A673 (cell line): ENCODE measurements at regions of chr4 and their contacts with region 1.

Region 1: DNA sequence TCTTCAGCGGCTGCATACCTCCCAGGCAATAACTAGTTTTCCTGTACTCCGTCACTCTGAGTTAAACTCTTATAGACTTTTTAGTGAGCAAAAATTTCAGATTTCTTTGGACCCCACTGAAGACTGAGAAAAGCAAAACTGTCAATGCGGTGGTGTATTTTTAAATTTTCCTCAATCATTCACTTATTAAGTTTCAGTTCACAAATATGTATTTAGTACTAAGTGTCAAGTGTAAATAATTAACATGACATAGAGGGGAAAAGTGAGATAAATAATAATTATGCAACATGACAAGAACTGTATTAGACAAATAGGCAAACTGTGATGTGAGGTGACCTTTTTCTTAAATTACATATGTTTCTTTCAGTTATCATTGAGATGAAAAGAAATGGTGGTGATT is 124.4 kb downstream of the NAF1 start:
- DNase-seq: no peak
- H3K4me3 ChIP-seq: no peak overlapping the region
- H3K27ac ChIP-seq: no peak overlapping the region
- H3K4me1 ChIP-seq: no peaks in the 10 kb centered on the region
- H3K27me3 ChIP-seq: no peaks in the 10 kb centered on the region
- CTCF ChIP-seq: no peak

Region 2: DNA sequence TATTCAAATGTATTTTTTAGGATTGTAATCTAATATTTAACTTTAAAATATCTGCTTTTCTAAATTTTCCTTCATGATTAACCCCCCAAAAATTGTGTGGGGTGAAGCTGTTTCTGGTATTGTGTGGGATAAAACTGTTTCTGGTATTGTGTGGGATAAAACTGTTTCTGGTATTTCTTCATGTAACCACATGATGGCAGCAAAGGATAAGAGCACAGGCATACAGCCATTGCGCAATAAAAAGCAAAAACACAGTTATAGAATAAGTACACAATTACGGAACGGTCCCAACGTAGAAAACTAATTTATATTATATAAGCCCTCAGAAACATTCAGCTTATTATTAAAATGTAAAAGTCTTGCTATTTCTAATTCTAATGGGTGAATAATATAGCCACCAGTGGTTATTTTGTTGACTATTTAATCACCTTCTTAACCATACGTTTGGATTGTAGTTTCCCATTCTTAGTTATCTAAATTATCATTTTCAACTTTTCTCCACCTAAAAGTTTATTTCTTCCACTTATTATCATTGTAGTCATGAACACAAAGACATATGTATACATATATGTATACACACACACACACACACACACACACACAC is 544.6 kb before region 1 on chr4:
- CTCF ChIA-PET with region 1: interaction called, 11 read pairs
- POLR2A ChIA-PET with region 1: no interaction called
- intact Hi-C with region 1: loop called (anchors 1 kb)
- DNase-seq: peak; percentile 57
- H3K4me3 ChIP-seq: no peak overlapping the region
- H3K27ac ChIP-seq: no peak overlapping the region
- H3K4me1 ChIP-seq: no peaks in the 10 kb centered on the region
- H3K27me3 ChIP-seq: no peaks in the 10 kb centered on the region
- CTCF ChIP-seq: peak; percentile 76

Region 3: GRCh38 chr4:162506253-162506652 is 536.1 kb before region 1 on chr4:
- CTCF ChIA-PET with region 1: interaction called, 14 read pairs
- POLR2A ChIA-PET with region 1: no interaction called
- intact Hi-C with region 1: no loop called
- DNase-seq: no peak
- H3K4me3 ChIP-seq: no peak overlapping the region
- H3K27ac ChIP-seq: no peak overlapping the region
- H3K4me1 ChIP-seq: no peaks in the 10 kb centered on the region
- H3K27me3 ChIP-seq: no peaks in the 10 kb centered on the region
- CTCF ChIP-seq: no peak

Region 4: DNA sequence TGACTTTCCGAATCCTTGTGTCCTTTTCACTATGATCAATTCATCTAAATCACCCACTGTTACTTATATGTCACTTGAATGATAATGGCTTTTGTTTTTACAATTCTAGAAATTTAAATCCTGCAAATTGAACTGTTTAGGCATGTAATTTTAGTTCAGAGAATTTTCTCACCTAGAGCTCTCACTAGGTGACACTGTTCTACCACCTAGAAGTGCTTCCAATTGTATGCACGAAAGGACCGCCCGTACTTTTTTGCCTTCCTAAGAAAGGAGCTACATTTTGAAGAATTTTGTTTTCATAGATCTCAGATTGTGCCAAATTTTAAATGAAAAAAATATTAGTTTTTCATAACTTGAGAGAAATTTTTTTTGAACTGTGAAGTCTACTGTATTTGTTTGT is 396.9 kb before region 1 on chr4:
- CTCF ChIA-PET with region 1: no interaction called
- POLR2A ChIA-PET with region 1: no interaction called
- intact Hi-C with region 1: loop called (anchors 5 kb)
- DNase-seq: no peak
- H3K4me3 ChIP-seq: no peak overlapping the region
- H3K27ac ChIP-seq: no peak overlapping the region
- H3K4me1 ChIP-seq: no peaks in the 10 kb centered on the region
- H3K27me3 ChIP-seq: no peaks in the 10 kb centered on the region
- CTCF ChIP-seq: 0 out of 2 replicates have a peak, but pooled peaks have one; percentile 22

Region 5: DNA sequence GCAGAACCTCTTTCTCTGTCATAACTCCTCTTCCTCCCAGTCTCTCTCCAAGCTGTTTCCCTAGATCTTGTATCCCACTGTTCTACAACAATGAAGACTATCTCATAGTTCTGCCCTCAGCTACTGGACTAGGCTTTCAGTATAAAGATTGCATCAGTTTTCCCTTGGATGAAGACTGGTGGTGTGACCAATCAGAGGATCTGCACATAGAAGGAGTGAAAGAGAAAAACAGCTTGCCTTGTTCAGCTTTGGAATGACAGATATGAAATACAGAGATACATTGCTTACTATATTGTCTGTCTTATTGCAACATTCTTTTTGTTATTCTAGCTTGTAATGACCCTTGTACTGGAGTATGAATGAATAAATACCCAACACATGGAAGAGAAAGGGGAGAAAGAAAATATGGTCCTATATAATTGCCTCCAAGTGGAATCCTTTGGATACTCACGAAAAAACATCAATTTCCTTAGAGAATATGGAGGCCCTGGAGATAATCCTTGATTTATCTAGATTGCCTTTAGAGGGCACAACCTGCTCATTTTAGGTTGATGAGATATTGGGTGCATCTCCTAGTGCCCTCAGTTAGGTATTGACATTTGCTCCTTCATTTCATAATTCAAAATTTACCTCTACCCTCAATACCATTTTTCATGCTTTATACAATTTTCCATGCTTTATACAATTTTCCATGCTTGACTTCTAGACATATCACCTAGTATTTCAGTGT is 271.4 kb before region 1 on chr4:
- CTCF ChIA-PET with region 1: no interaction called
- POLR2A ChIA-PET with region 1: no interaction called
- intact Hi-C with region 1: loop called (anchors 5 kb)
- DNase-seq: peak; percentile 2
- H3K4me3 ChIP-seq: no peak overlapping the region
- H3K27ac ChIP-seq: no peak overlapping the region
- H3K4me1 ChIP-seq: no peaks in the 10 kb centered on the region
- H3K27me3 ChIP-seq: no peaks in the 10 kb centered on the region
- CTCF ChIP-seq: no peak; the same call in 1 of the 2 replicates

Region 6: GRCh38 chr4:162839819-162840218 is 202.5 kb before region 1 on chr4:
- CTCF ChIA-PET with region 1: no interaction called
- POLR2A ChIA-PET with region 1: no interaction called
- intact Hi-C with region 1: no loop called
- DNase-seq: no peak
- H3K4me3 ChIP-seq: no peak overlapping the region
- H3K27ac ChIP-seq: no peak overlapping the region
- H3K4me1 ChIP-seq: no peaks in the 10 kb centered on the region
- H3K27me3 ChIP-seq: no peaks in the 10 kb centered on the region
- CTCF ChIP-seq: peak; percentile 42

Region 7: DNA sequence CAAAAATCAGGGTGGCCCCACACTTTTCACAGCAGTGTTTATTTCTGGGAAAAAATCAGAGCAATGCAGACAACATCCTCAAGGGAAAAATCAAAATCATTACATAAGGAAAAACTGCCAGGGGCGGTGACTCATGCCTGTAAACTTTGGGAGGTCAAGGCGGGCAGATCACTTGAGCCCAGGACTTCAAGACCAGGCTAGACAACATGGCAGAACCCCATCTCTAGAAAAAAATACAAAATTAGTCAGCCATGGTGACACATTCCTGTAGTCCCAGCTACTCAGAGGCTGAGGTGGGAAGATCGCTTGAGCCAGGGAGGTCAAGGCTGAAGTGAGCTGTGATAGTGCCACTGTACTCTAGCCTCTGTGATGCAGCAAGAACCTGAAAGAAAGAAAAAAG is 21.6 kb after region 1 on chr4:
- CTCF ChIA-PET with region 1: no interaction called
- POLR2A ChIA-PET with region 1: no interaction called
- intact Hi-C with region 1: no loop called
- DNase-seq: no peak
- H3K4me3 ChIP-seq: no peak overlapping the region
- H3K27ac ChIP-seq: no peak overlapping the region
- H3K4me1 ChIP-seq: no peaks in the 10 kb centered on the region
- H3K27me3 ChIP-seq: no peaks in the 10 kb centered on the region
- CTCF ChIP-seq: no peak

Region 8: GRCh38 chr4:164288578-164288977 is 1246.3 kb after region 1 on chr4:
- CTCF ChIA-PET with region 1: no interaction called
- POLR2A ChIA-PET with region 1: no interaction called
- intact Hi-C with region 1: no loop called
- DNase-seq: no peak
- H3K4me3 ChIP-seq: no peak overlapping the region
- H3K27ac ChIP-seq: no peak overlapping the region
- H3K4me1 ChIP-seq: no peaks in the 10 kb centered on the region
- H3K27me3 ChIP-seq: no peaks in the 10 kb centered on the region
- CTCF ChIP-seq: no peak